Caco-2 (cell line): ENCODE measurements at regions of chr12 and their contacts with region 1.

Region 1: DNA sequence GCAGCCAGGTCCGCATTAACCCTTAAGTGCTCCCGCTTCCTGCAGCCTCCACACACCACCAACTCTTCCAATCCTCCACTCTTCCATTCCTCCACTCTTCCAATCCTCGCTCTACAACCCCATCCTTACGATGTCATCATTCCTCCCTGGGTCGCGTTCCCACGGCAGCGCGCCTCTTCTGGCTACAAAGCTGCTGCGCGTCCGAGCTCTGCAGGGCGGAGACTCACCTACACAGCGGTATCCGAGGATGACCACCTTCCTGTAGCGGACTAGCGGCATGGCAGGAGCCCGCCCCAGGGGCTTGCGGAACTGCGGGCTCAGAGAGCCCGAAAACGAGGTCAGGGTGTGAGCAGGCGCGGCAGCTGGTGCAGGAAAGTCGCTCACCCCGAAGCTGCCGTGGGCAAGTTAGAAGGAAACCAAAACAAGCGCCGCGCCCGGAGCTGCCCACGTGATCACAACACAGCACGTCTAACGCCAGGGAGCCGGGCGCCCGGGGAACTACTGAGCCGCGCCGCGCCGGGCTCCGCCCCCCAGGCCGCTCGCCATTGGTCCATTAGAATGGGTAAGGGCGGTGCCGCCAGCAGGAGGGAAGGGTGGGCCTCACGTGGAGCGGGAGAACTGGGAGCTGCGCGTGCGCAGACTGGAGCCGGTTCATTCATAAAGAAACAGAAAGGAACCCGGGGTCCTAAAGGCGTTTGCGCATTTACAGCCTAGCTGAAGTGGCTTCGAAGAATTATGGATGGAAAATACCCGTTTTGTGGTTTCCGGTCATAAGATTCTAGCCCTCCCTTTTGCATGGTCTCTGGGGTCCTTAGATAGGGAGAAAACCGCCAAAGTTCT is at the start of gene RHEBL1:
- DNase-seq: peak; percentile 98 to 99
- H3K4me3 ChIP-seq: peak within 1 kb of the TSS; percentile 78
- H3K4me3 Mint-ChIP-seq: peak within 1 kb of the TSS; percentile 88
- H3K27ac Mint-ChIP-seq: peak within 1 kb of the TSS; percentile 65
- H3K4me1 ChIP-seq: peaks cover 7% of the 10 kb centered on the region; the same call in 1 of the 2 replicates
- H3K4me1 Mint-ChIP-seq: peaks cover 7% of the 10 kb centered on the region
- H3K27me3 ChIP-seq: no peaks in the 10 kb centered on the region
- H3K27me3 Mint-ChIP-seq: no peaks in the 10 kb centered on the region
- CTCF ChIP-seq: peak; percentile 9 to 34
- total RNA-seq, gene RHEBL1: 2.5 and 2.6 TPM in 2 replicates

Region 2: DNA sequence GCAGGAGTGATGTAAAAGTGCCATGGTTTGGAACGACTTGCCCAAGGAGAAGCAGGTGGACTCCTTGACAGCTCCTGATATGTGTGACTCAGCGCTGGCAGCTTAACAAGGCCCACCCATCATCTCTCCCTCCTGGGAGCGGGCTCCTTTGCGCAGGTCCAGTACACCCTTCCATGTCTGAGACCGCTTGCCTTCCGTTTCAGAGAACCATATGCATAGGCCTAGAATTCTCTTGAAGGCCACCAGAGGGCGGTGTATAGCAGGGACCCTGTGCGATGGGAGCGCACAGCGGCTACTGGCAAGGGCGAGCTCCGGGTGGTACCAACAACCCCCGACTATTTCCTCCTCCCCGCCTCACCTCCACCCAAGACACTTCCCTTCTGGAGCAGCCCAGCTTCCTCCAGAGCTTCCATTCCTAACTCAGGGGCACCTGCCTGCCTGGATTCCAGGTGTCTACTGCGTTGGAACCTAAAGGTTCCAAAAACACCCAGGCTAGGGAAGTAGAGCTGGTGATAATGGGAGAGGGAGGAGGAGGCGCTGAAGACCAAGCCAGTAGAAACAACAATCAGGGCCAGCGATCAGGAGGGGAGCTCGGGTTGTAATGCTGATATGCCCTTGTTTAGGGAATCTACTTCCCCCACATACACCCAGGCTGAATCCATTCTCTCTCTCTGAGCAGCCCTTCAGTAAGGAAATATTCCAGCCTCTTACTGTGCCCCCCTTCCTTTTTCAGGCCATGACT is 18.6 kb after region 1 on chr12:
- CTCF ChIA-PET with region 1: interaction called, 36 read pairs
- POLR2A ChIA-PET with region 1: interaction called, 4 read pairs
- intact Hi-C with region 1: loop called (anchors 1 kb)
- DNase-seq: peak; percentile 84
- H3K4me3 ChIP-seq: no peak overlapping the region
- H3K4me3 Mint-ChIP-seq: peak overlapping the region; percentile 50
- H3K27ac Mint-ChIP-seq: no peak overlapping the region
- H3K4me1 ChIP-seq: peaks cover 11% of the 10 kb centered on the region
- H3K4me1 Mint-ChIP-seq: no peaks in the 10 kb centered on the region
- H3K27me3 ChIP-seq: peaks cover 8% of the 10 kb centered on the region; the same call in 1 of the 2 replicates
- H3K27me3 Mint-ChIP-seq: peaks cover 19% of the 10 kb centered on the region
- CTCF ChIP-seq: peak; percentile 91 to 97

Region 3: GRCh38 chr12:49098035-49098451 is 28.3 kb after region 1 on chr12:
- CTCF ChIA-PET with region 1: interaction called, 8 read pairs
- POLR2A ChIA-PET with region 1: no interaction called
- intact Hi-C with region 1: loop called (anchors 1 kb)
- DNase-seq: peak in 1 of 2 experiments; percentile 71
- H3K4me3 ChIP-seq: no peak overlapping the region
- H3K4me3 Mint-ChIP-seq: no peak overlapping the region
- H3K27ac Mint-ChIP-seq: no peak overlapping the region
- H3K4me1 ChIP-seq: no peaks in the 10 kb centered on the region; the same call in 1 of the 2 replicates
- H3K4me1 Mint-ChIP-seq: peaks cover 7% of the 10 kb centered on the region
- H3K27me3 ChIP-seq: peaks cover 8% of the 10 kb centered on the region; the same call in 1 of the 2 replicates
- H3K27me3 Mint-ChIP-seq: peaks cover 11% of the 10 kb centered on the region
- CTCF ChIP-seq: peak; percentile 78 to 90

Region 4: GRCh38 chr12:49110464-49111155 is 40.9 kb after region 1 on chr12 and contains the start of gene LMBR1L:
- CTCF ChIA-PET with region 1: interaction called, 5 read pairs
- POLR2A ChIA-PET with region 1: interaction called, 6 read pairs
- intact Hi-C with region 1: loop called (anchors 2 kb)
- DNase-seq: peak; percentile 97 to 98
- H3K4me3 ChIP-seq: peak within 1 kb of the TSS; percentile 77
- H3K4me3 Mint-ChIP-seq: peak within 1 kb of the TSS; percentile 97
- H3K27ac Mint-ChIP-seq: peak within 1 kb of the TSS; percentile 89
- H3K4me1 ChIP-seq: peaks cover 14% of the 10 kb centered on the region
- H3K4me1 Mint-ChIP-seq: peaks cover 18% of the 10 kb centered on the region
- H3K27me3 ChIP-seq: no peaks in the 10 kb centered on the region
- H3K27me3 Mint-ChIP-seq: no peaks in the 10 kb centered on the region
- CTCF ChIP-seq: peak; percentile 25 to 62
- total RNA-seq, gene LMBR1L: 43.1 and 43.9 TPM in 2 replicates

Region 5: DNA sequence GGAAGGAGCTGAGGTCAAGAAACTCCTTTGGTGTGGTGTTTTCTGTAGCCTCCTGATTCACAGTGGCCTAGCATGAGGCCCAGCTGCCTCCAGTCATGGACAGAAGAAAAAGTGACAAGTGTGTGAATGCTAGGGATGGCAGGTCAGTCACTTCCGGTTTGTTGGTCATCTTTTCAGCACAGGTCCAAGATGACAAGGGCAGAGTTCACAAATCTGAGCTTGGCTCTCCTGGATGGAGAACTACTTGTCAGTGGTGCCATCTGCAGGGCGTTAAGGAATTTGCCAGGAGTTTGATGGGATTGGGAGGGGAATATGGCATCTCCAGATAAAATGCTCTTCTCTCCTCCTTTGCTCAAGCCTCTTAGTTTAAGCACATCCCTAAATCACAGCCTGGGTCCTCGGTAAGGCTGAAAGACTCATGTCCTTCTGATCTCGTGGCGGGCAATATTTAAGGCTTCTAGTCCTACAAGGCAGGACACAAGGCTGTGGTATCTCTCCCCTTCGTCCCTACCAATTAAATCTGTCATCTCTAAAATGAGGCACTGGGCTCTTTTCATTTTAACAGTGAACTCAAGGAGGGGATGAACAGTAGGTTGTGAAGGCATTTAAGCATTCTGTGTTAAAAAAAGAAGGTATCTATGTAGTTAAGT is 51.4 kb after region 1 on chr12:
- CTCF ChIA-PET with region 1: interaction called, 30 read pairs
- POLR2A ChIA-PET with region 1: interaction called, 3 read pairs
- intact Hi-C with region 1: loop called (anchors 1 kb)
- DNase-seq: peak; percentile 77 to 81
- H3K4me3 ChIP-seq: no peak overlapping the region
- H3K4me3 Mint-ChIP-seq: no peak overlapping the region
- H3K27ac Mint-ChIP-seq: no peak overlapping the region
- H3K4me1 ChIP-seq: no peaks in the 10 kb centered on the region
- H3K4me1 Mint-ChIP-seq: no peaks in the 10 kb centered on the region
- H3K27me3 ChIP-seq: no peaks in the 10 kb centered on the region
- H3K27me3 Mint-ChIP-seq: no peaks in the 10 kb centered on the region
- CTCF ChIP-seq: peak; percentile 77 to 78

Region 6: GRCh38 chr12:49130151-49131050 is 60.7 kb after region 1 on chr12:
- CTCF ChIA-PET with region 1: interaction called, 8 read pairs
- POLR2A ChIA-PET with region 1: interaction called, 20 read pairs
- intact Hi-C with region 1: loop called (anchors 1 kb)
- DNase-seq: peak; percentile 94 to 96
- H3K4me3 ChIP-seq: peak overlapping the region; percentile 88
- H3K4me3 Mint-ChIP-seq: peak overlapping the region; percentile 74
- H3K27ac Mint-ChIP-seq: peak overlapping the region; percentile 99
- H3K4me1 ChIP-seq: peaks cover 8% of the 10 kb centered on the region
- H3K4me1 Mint-ChIP-seq: peaks cover 10% of the 10 kb centered on the region
- H3K27me3 ChIP-seq: no peaks in the 10 kb centered on the region
- H3K27me3 Mint-ChIP-seq: no peaks in the 10 kb centered on the region
- CTCF ChIP-seq: peak; percentile 92 to 95

Region 7: DNA sequence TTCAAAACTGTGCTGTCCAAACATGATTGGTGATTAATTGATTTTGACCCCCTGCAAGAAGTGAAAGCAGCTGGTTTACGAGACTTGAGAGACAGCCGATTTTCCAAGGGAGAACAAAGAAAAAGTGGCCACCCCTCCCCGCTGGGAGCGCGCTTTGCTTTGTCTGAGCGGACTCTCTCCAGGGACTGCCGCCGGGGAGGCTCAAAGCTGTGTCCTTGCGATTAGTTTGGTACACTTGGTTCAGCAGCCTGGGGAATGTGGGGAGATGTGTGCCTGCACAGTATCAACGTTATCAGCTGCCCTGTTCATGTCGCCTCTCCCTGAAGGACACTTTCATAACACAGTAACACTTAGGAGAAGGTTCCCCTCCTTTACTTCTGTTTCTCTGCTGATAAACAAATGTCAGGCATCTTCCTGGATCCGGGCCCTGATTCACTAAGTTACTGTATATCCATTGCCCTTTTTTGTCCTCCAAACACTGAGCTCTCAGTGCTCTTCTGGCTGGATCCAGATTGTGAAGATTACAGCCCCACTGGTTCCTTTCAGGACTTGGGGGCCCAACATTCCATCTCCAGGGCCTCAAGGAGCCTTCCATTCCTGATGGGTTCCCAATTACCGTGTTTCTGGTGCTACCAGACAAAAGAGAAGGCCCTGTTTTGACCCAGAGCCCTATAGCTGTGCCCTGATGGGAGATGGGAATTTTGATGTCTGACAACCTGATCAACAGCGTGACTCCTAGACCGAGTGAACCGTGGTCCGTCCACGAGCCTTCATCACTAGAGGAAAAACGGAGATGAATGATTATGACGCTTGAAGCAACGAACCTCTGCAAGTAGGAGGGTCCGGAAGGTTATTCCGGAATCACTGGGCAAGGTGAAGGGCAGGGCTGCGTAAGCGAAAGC is 163.5 kb after region 1 on chr12:
- CTCF ChIA-PET with region 1: interaction called, 9 read pairs
- POLR2A ChIA-PET with region 1: interaction called, 6 read pairs
- intact Hi-C with region 1: loop called (anchors 1 kb)
- DNase-seq: no peak
- H3K4me3 ChIP-seq: no peak overlapping the region
- H3K4me3 Mint-ChIP-seq: peak overlapping the region; percentile 82
- H3K27ac Mint-ChIP-seq: peak overlapping the region; percentile 47
- H3K4me1 ChIP-seq: no peaks in the 10 kb centered on the region; the same call in 1 of the 2 replicates
- H3K4me1 Mint-ChIP-seq: peaks cover 13% of the 10 kb centered on the region
- H3K27me3 ChIP-seq: no peaks in the 10 kb centered on the region
- H3K27me3 Mint-ChIP-seq: peaks cover 2% of the 10 kb centered on the region
- CTCF ChIP-seq: no peak

Region 8: DNA sequence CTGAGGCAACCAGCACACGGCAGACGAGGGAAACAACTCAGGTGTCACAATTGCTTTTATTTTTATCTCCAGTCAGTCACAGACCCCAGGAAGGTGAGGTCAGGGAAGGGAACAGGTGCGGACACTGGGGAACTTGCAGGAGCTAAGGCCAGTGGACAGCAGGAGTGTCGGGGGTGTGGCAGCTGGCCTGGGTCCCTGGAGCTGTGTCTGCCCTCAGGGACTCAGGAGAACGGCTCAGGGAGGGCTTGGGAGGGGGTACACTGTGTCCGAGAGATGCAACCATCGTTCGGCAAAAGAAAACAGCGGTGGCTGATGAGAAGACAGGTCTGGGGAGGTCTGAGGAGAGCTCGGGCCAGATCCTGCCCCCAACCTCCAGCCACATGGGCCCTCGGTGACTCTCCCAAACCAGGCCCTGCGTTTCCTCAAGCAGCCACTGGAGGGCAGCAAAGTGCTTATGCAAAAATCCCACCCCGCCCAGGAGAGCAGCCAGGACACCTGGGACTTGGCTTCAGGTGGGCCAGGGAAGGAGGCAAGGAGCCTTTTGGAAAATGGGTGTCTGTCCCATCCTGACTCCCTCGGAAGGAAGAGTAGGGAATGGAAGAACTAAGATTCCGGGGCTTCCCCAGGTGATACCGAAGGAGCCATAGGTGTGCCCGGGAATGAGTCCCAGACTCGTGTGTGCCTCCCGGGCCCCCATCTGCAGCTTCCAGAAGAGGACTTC is 797.3 kb after region 1 on chr12:
- CTCF ChIA-PET with region 1: no interaction called
- POLR2A ChIA-PET with region 1: no interaction called
- intact Hi-C with region 1: no loop called
- DNase-seq: peak; percentile 89 to 93
- H3K4me3 ChIP-seq: 0 out of 2 replicates have a peak overlapping the region, but pooled peaks have one; percentile 1
- H3K4me3 Mint-ChIP-seq: peak overlapping the region; percentile 60
- H3K27ac Mint-ChIP-seq: peak overlapping the region; percentile 90
- H3K4me1 ChIP-seq: peaks cover 53% of the 10 kb centered on the region
- H3K4me1 Mint-ChIP-seq: peaks cover 46% of the 10 kb centered on the region
- H3K27me3 ChIP-seq: no peaks in the 10 kb centered on the region
- H3K27me3 Mint-ChIP-seq: no peaks in the 10 kb centered on the region
- CTCF ChIP-seq: peak; percentile 98 to 99